ENCODE measurements at regions of chr21 and their contacts with region 1.

Region 1: DNA sequence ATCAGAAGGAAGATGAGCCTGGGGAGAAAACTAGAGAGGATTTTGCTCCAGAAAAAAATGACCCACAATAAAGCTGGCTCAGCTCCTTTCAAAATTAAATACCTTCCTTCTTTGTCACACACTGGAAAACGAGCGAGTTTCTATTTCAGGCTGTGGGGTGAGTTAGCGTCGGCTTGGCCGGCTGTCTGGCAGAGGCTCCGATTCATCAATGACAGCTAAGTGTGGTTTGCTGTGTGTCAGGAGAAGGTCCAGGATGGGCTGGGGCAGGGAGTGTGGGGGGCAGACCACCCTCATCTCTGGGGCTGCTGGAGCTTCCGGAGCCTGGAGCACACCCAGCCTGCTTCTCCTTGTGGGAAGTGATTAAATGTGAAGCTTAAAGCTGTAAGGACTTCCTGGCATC is 120.2 kb downstream of the ETS2 start:
- DNase-seq: peak; percentile 63
- H3K4me3 ChIP-seq: no peak overlapping the region
- H3K27ac ChIP-seq: peak overlapping the region; percentile 51 to 69
- H3K4me1 ChIP-seq: no peaks in the 10 kb centered on the region
- H3K27me3 ChIP-seq: no peaks in the 10 kb centered on the region
- CTCF ChIP-seq: no peak
- POLR2A ChIP-seq: peak; percentile 32

Region 2: DNA sequence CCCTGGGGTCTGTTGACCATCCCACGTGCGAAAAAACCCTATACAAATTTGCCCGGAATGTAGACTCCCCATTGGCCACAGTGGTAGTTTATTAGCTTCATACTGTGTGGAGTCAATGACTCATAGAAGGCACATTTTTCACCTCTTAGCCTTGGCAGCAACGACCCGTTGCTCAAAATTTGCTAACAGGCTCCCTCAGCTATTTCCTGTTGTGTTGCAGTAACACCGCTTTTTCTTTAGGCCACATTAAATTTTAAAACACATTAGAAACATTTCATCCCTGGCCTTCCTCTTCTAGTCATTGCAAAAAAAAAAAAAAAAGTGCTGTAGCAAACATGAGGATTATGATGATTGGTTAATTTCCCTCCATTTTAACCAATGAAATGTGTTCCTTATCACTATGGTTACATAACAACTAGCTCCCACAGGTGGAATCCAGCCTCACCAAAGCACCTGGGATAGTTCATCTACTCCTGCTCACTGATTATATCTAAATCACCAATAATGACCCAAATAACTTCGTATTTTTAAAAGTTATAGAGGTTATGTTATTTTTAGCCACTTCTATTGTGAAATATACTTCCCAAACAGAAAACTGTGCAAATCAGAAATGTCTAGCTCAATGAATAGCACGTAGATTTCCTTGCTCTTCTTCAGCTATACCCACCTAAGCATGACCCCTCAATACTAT is 170.1 kb before region 1 on chr21:
- intact Hi-C with region 1: loop called (anchors 10 kb)
- DNase-seq: no peak
- H3K4me3 ChIP-seq: no peak overlapping the region
- H3K27ac ChIP-seq: peak overlapping the region in 1 of 2 donors; percentile 36
- H3K4me1 ChIP-seq: no peaks in the 10 kb centered on the region
- H3K27me3 ChIP-seq: no peaks in the 10 kb centered on the region
- CTCF ChIP-seq: no peak
- POLR2A ChIP-seq: no peak

Region 3: DNA sequence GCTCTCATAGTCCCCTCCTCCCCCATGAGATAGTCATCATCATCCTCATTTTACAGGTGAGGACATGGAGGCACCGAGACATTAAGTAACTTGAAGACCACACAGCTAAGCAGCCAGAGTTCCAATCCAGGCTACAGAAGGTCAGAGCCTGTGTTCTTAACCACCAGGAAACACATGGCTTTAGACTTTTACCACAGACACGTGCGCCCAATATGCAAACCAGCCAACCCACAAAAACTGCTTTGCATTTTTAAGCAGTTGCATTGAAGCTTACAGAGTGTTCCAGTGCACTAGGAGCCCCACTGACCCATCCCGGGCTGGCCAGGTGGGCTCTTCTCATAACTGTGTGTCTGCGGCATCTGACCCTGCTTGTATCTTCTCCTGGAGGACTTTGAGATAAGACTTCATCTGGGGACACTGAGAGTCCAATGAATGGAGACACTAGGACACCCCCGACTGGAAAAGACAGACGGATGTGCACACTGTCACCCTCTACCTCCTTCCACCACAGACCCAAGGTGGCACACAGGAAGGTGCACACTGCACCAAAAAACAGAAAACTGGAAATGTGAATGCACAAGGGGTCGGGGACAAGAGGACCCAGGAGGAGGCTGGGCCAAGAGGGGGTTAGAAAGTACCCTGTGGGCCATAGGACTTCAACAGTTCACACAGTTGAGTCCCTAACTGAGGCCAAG is 63.8 kb before region 1 on chr21:
- intact Hi-C with region 1: no loop called
- DNase-seq: no peak
- H3K4me3 ChIP-seq: no peak overlapping the region
- H3K27ac ChIP-seq: no peak overlapping the region
- H3K4me1 ChIP-seq: no peaks in the 10 kb centered on the region
- H3K27me3 ChIP-seq: no peaks in the 10 kb centered on the region
- CTCF ChIP-seq: no peak
- POLR2A ChIP-seq: no peak

Region 4: DNA sequence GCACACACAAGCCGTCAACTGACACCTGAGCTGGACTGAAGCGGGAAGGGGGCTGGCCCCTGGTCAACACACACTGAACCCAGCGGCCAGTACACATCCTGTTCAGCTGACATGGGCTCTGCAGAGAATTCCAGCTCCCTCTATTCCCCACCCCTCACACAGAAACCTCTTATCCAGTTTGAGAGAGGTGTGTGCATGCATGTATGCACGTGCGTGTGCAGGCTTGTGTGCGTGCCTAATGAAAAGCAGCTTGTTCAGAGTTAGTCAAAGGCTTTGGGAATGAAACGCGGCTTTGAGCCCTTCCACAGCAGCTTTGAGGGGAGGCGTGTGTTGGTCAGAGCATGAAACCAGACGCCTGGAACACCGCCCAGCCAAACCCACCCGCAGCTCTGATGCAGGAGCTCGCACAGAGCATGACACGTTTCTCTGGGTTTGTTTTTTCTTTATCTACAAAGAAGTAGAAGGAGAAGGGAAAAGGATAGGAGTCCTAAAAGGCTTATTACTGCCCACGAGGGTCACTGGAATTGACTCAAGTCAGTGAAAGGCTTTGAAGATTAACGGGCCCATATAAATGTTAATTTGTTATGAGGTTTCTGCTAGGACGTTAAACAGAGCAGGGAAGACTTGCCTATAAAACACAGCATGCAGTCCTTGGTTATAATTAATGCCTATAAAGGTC is 64.0 kb after region 1 on chr21:
- intact Hi-C with region 1: loop called (anchors 5 kb)
- DNase-seq: peak; percentile 75
- H3K4me3 ChIP-seq: no peak overlapping the region
- H3K27ac ChIP-seq: peak overlapping the region; percentile 59 to 72
- H3K4me1 ChIP-seq: peaks cover 24% of the 10 kb centered on the region
- H3K27me3 ChIP-seq: peaks cover 3% of the 10 kb centered on the region
- CTCF ChIP-seq: no peak
- POLR2A ChIP-seq: no peak

Measured in prostate gland (tissue), 2 donors.